ENCODE measurements at regions of chr6 and their contacts with region 1.

Region 1: DNA sequence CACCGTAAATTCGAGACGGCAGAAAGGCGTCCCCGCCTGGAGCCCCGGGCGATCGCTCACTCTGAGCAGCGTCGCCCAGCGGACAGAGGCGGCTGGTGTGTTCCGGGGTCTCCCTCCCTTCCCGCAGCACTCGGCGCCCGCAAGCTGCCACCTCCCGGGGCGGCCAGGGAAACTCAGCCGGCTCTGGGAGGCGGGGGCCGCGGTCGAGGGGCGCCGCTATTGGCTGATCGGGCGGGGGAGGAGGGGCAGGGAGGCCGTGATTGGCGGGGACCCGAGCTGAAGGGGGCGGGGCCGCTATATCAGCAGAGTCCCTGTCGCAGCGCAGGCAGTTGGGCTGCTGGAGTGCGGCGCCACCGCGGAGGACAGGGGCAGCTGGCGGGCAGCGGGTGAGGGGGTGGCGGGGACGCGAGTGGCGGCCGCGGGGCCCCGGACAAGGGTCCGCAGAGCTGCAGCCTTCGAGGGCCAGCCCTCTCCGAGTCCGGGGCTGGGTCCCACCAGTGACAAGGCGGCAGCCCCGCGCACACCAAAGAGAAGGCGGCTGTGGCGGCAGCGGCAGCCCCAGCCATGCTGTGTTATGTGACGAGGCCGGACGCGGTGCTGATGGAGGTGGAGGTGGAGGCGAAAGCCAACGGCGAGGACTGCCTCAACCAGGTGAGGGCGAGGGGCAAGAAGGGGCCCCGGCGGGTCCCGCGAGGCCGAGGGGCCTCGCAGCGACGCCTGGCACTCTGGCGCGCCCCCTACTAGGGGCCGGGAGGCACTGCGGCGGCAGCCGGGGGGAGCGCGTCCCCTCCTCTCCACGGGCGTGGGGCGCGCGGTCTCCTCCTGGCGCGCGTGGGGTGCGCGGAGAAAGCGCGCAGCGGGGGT is at the start of gene MYLIP:
- DNase-seq: peak; percentile 94
- H3K4me3 Mint-ChIP-seq: peak within 1 kb of the TSS; percentile 91
- H3K27ac Mint-ChIP-seq: peak within 1 kb of the TSS; percentile 91
- H3K4me1 Mint-ChIP-seq: peaks cover 35% of the 10 kb centered on the region
- H3K27me3 Mint-ChIP-seq: peaks cover 21% of the 10 kb centered on the region
- total RNA-seq, gene MYLIP: 20.7 and 21.9 TPM in 2 replicates

Region 2: DNA sequence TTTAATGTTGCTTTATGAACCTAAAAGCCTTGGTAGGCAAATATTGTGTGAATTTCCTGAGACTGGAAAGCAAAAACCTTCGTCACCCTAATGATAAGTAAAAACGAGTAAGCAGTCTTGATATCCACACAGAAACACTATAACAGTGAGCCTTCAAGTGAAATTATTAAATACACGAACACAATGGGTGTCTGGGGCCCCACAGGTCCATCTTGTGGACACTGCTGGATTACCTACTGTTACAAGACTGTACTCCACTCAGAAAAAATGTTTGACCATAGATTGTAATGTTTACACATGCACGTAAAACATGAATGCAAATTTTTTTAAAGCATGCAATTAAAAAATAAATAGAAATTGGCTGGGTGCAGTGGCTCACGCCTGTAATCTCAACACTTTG is 1544.5 kb before region 1 on chr6:
- intact Hi-C with region 1: no loop called
- DNase-seq: no peak
- H3K4me3 Mint-ChIP-seq: no peak overlapping the region
- H3K27ac Mint-ChIP-seq: no peak overlapping the region
- H3K4me1 Mint-ChIP-seq: no peaks in the 10 kb centered on the region
- H3K27me3 Mint-ChIP-seq: peaks cover 2% of the 10 kb centered on the region

Region 3: DNA sequence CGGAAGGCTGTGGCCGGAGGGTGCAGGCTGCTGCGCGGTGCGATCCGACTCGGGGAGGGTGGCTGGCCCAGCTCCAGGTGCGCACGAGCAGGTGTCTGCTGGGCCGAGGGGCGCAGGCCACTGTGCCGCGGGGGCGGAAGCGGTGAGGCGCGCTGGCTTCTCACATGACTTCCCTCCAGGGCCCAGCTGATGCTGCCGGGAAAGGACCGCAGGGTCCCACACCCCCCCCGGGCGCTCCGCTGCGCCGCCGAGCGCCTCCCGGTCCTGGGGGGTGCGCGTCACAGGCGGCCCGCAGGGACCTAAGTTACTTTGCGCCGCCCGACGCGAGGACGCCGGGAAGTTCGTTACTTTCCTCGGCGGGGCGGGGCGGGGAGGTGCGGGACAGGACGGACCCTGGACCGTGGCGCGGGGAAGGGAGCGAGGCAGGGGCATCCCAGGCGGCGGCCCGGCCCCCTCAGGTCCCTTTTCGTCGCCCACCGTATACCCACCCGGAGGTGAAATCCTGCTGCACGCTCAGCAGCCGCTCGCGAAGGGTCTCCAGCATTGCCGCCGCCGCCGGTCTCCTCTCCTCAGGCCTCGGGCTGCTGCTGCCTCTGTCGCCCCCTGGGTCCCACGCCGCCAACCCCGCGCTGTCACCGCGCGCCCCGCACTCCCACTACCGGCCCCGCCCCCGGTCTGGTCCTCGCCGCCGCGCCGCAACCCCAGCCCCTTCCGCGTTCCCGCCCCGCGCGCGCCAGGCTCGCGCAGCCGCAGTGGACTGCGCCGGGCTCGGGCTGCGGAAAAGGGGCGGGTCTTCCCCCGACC is 466.5 kb before region 1 on chr6 and contains the start of gene DTNBP1:
- intact Hi-C with region 1: loop called (anchors 2 kb)
- DNase-seq: peak; percentile 85
- H3K4me3 Mint-ChIP-seq: peak within 1 kb of the TSS; percentile 81
- H3K27ac Mint-ChIP-seq: peak within 1 kb of the TSS; percentile 77
- H3K4me1 Mint-ChIP-seq: peaks cover 24% of the 10 kb centered on the region
- H3K27me3 Mint-ChIP-seq: peaks cover 14% of the 10 kb centered on the region
- total RNA-seq, gene DTNBP1: 17.2 and 19.2 TPM in 2 replicates

Region 4: GRCh38 chr6:15817121-15817520 is 311.9 kb before region 1 on chr6:
- intact Hi-C with region 1: no loop called
- DNase-seq: no peak
- H3K4me3 Mint-ChIP-seq: no peak overlapping the region
- H3K27ac Mint-ChIP-seq: no peak overlapping the region
- H3K4me1 Mint-ChIP-seq: no peaks in the 10 kb centered on the region
- H3K27me3 Mint-ChIP-seq: peaks cover 8% of the 10 kb centered on the region

Region 5: GRCh38 chr6:15901141-15902115 is 227.6 kb before region 1 on chr6:
- intact Hi-C with region 1: loop called (anchors 2 kb)
- DNase-seq: peak; percentile 44
- H3K4me3 Mint-ChIP-seq: peak overlapping the region; percentile 50
- H3K27ac Mint-ChIP-seq: peak overlapping the region; percentile 87
- H3K4me1 Mint-ChIP-seq: peaks cover 42% of the 10 kb centered on the region
- H3K27me3 Mint-ChIP-seq: no peaks in the 10 kb centered on the region

Region 6: GRCh38 chr6:16183187-16183664 is 54.2 kb after region 1 on chr6:
- intact Hi-C with region 1: loop called (anchors 1 kb)
- DNase-seq: no peak
- H3K4me3 Mint-ChIP-seq: peak overlapping the region; percentile 5
- H3K27ac Mint-ChIP-seq: no peak overlapping the region
- H3K4me1 Mint-ChIP-seq: peaks cover 44% of the 10 kb centered on the region
- H3K27me3 Mint-ChIP-seq: peaks cover 13% of the 10 kb centered on the region

Region 7: GRCh38 chr6:16238057-16238962 is 109.3 kb after region 1 on chr6 and contains the start of gene GMPR:
- intact Hi-C with region 1: loop called (anchors 2 kb)
- DNase-seq: peak; percentile 76
- H3K4me3 Mint-ChIP-seq: peak within 1 kb of the TSS; percentile 84
- H3K27ac Mint-ChIP-seq: peak within 1 kb of the TSS; percentile 64
- H3K4me1 Mint-ChIP-seq: peaks cover 26% of the 10 kb centered on the region
- H3K27me3 Mint-ChIP-seq: peaks cover 41% of the 10 kb centered on the region
- total RNA-seq, gene GMPR: 0.96 and 1.2 TPM in 2 replicates

Measured in activated T-helper 1 cell treated with anti-CD3 and anti-CD28 coated beads, Interleukin-12 subunit alpha, Interleukin-12 subunit beta, Interleukin-2, Interleukin-4 antibody, amounts not matched to agents 30 ng/mL and 10 ng/mL and 1 ng/mL, durations not matched to agents 14 hours and 24 hours and 36 hours (primary cell).